ENCODE measurements at regions of chr1 and their contacts with region 1.

Region 1: GRCh38 chr1:37486680-37487618 is 12.6 kb downstream of the ZC3H12A start:
- DNase-seq: peak; percentile 86
- H3K4me3 Mint-ChIP-seq: no peak overlapping the region
- H3K27ac Mint-ChIP-seq: peak overlapping the region; percentile 37
- H3K4me1 Mint-ChIP-seq: peaks cover 27% of the 10 kb centered on the region
- H3K27me3 Mint-ChIP-seq: no peaks in the 10 kb centered on the region
- CTCF ChIP-seq: peak; percentile 98

Region 2: GRCh38 chr1:37458528-37458927 is 28.4 kb before region 1 on chr1:
- CTCF ChIA-PET with region 1: interaction called, 234 read pairs
- POLR2A ChIA-PET with region 1: interaction called, 36 read pairs
- intact Hi-C with region 1: loop called (anchors 1 kb)
- DNase-seq: no peak
- H3K4me3 Mint-ChIP-seq: no peak overlapping the region
- H3K27ac Mint-ChIP-seq: no peak overlapping the region
- H3K4me1 Mint-ChIP-seq: peaks cover 9% of the 10 kb centered on the region
- H3K27me3 Mint-ChIP-seq: no peaks in the 10 kb centered on the region
- CTCF ChIP-seq: no peak

Region 3: GRCh38 chr1:37474046-37474759 is 12.7 kb before region 1 on chr1 and contains the start of gene ZC3H12A:
- CTCF ChIA-PET with region 1: interaction called, 144 read pairs
- POLR2A ChIA-PET with region 1: interaction called, 138 read pairs
- intact Hi-C with region 1: no loop called
- DNase-seq: peak; percentile 93
- H3K4me3 Mint-ChIP-seq: peak within 1 kb of the TSS; percentile 89
- H3K27ac Mint-ChIP-seq: peak within 1 kb of the TSS; percentile 94
- H3K4me1 Mint-ChIP-seq: peaks cover 49% of the 10 kb centered on the region
- H3K27me3 Mint-ChIP-seq: no peaks in the 10 kb centered on the region
- CTCF ChIP-seq: no peak
- total RNA-seq, gene ZC3H12A: 37.2 and 51.4 TPM in 2 replicates

Region 4: GRCh38 chr1:37509181-37509580 is 22.2 kb after region 1 on chr1:
- CTCF ChIA-PET with region 1: interaction called, 21 read pairs
- POLR2A ChIA-PET with region 1: interaction called, 36 read pairs
- intact Hi-C with region 1: no loop called
- DNase-seq: peak; percentile 21
- H3K4me3 Mint-ChIP-seq: no peak overlapping the region
- H3K27ac Mint-ChIP-seq: no peak overlapping the region
- H3K4me1 Mint-ChIP-seq: peaks cover 22% of the 10 kb centered on the region
- H3K27me3 Mint-ChIP-seq: no peaks in the 10 kb centered on the region
- CTCF ChIP-seq: peak; percentile 10

Region 5: DNA sequence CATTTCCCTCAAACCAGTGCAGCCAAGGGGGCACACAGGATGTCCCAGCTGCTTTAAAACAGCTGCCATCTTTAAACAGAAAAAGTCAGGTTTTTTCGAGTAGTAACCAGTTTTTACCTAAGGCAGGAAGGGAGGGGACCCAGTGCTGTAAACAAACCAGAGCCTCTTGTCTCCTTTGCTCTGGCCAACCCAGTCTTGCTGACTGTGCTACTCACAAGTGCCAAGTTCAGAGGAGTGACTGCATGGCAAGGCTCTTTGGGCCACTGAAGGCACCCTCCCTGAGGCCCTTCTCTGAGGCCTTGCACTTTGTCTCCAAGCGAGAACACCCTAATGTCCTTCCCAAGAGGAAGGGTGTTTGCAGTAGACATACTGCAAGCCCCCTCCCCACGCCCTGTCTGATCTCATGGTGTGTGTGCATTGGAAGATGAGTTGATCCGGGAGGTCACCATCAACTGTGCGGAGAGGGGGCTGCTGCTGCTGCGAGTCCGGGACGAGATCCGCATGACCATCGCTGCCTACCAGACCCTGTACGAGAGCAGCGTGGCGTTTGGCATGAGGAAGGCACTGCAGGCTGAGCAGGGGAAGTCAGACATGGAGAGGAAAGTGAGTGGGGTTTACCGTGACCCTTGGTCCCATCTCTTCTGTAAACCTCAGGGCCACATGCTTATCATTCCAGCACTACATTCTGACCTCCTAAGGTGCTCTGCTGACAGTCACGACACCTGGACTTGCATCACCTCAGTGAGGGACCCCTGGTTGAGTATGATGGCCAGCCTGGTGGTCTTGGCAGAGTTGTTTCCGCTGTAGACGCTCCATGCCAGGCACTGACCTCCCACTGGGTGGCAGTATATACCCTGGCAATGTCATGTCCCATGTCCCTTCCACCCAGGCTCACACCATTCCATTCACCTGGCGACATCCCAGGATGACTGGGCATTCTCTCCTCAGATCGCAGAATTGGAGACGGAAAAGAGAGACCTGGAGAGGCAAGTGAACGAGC is 74.5 kb after region 1 on chr1:
- CTCF ChIA-PET with region 1: interaction called, 10 read pairs
- POLR2A ChIA-PET with region 1: no interaction called
- intact Hi-C with region 1: no loop called
- DNase-seq: peak; percentile 44
- H3K4me3 Mint-ChIP-seq: no peak overlapping the region
- H3K27ac Mint-ChIP-seq: no peak overlapping the region
- H3K4me1 Mint-ChIP-seq: no peaks in the 10 kb centered on the region
- H3K27me3 Mint-ChIP-seq: no peaks in the 10 kb centered on the region
- CTCF ChIP-seq: peak; percentile 45

Region 6: DNA sequence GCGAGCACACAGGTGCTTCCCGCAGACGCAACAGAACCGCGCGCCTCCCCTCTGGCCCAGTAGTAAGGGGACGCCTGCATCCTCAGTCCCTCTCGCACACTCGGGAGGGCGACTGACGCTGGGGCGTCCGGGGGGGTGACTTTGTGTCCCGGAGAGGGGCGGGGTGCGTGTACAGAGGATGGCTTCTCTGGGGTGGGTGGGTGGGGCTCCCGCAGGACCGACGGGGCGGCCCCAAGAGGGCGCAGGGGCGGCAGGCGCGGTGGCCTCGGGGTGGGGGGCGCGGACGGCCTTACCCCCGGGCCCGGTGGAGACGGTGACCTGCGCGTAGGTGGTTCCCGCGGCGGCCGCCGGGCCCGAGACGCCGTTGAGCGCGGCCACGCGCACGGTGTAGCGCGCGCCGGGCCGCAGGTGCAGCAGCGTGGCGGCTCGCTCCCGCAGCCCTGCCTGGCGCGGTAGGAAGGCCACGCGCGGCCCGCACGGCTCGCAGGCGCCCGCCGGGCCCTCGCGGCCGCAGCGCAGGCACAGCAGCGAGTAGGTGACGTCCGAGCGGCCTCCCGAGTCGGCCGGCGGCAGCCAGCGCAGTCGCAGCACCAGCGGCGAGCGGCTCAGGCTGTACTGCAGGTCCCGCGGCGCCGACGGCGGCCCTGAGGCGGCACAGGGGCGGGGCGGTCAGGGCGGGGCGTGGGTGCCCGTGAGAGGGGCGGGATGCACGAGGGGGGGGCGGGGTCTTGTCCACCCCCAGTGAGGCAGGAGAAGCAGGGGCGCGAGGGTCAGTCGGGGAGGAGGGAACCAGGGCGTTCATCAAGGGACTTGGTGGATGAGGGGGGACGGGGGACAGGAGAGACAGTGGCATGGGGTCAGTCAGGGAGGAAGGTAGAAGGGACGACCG is 265.9 kb after region 1 on chr1:
- CTCF ChIA-PET with region 1: no interaction called
- POLR2A ChIA-PET with region 1: no interaction called
- intact Hi-C with region 1: no loop called
- DNase-seq: no peak
- H3K4me3 Mint-ChIP-seq: peak overlapping the region; percentile 54
- H3K27ac Mint-ChIP-seq: no peak overlapping the region
- H3K4me1 Mint-ChIP-seq: no peaks in the 10 kb centered on the region
- H3K27me3 Mint-ChIP-seq: peaks cover 13% of the 10 kb centered on the region
- CTCF ChIP-seq: no peak

Region 7: DNA sequence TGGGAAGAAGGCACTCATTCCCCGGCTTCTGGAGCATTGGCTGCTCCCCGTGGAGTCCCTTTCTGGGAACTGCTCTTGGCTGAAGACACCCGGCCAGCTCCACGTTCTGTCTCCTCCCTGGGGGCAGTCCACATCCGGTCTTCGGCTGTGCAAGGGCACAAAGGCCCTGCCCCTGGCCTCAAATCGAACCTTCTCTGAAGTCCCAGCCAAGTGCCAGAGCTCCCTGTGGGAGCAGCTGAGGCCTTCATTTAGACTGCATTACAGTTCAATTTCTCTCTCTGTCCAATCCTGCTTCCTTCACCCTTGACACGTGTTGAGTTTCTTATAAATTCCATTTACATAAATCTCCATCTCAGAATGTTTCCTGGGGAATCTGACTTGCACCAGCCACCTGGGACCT is 692.5 kb after region 1 on chr1:
- CTCF ChIA-PET with region 1: no interaction called
- POLR2A ChIA-PET with region 1: no interaction called
- intact Hi-C with region 1: no loop called
- DNase-seq: no peak
- H3K4me3 Mint-ChIP-seq: no peak overlapping the region
- H3K27ac Mint-ChIP-seq: no peak overlapping the region
- H3K4me1 Mint-ChIP-seq: no peaks in the 10 kb centered on the region
- H3K27me3 Mint-ChIP-seq: peaks cover under 1% of the 10 kb centered on the region
- CTCF ChIP-seq: no peak